MCF 10A (cell line): ENCODE measurements at regions of chr10 and their contacts with region 1.

Region 1: DNA sequence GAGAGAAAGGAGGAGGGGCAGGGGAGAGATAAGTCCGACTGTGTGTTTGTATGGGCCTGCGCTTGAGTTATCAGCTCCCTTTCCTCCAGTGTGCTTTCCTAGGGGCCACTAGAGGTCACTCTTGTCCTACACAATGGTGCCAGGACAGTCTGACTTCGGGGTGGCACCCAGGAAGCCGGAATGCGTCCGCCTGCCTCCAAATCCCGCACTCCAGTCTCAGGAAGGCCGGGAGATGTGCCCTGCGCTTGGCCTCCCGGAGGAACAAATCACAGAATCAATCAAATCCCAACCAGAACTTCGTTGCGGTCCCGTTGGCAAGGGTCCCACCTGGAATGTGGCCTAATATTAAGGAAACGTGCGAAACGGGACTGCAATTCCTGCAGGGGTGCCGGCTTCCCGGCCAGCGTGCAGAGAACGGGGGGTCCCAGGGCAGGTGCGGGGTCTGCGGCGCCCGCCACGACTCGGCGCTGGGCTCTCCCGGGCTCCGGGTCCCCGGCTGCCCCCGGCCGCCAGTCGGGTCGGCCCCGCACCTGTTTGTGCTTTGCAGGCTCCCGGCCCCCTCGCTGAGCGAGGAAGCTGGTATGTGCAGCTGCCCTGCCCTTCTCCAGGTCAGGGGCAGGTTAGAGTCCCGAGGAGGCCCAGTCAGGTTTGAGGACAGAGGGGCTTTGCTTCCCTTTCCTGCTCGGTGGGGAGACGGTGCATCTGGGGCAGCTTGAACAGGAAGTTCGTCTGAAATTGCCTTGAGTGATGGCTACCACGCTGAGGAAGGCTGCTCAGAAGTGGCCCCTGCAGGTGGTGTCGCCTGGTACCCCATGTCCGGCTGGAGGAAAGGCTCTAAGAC is 21.0 kb upstream of the HPS1 start:
- DNase-seq: peak; percentile 93
- H3K4me3 Mint-ChIP-seq: peak overlapping the region; percentile 69
- H3K27ac Mint-ChIP-seq: no peak overlapping the region
- H3K4me1 Mint-ChIP-seq: no peaks in the 10 kb centered on the region
- H3K27me3 Mint-ChIP-seq: peaks cover 9% of the 10 kb centered on the region
- CTCF ChIP-seq: peak; percentile 83

Region 2: GRCh38 chr10:98446661-98447221 is 21.0 kb before region 1 on chr10 and contains the start of gene HPS1:
- CTCF ChIA-PET with region 1: interaction called, 21 read pairs
- POLR2A ChIA-PET with region 1: no interaction called
- intact Hi-C with region 1: no loop called
- DNase-seq: peak; percentile 57
- H3K4me3 Mint-ChIP-seq: peak within 1 kb of the TSS; percentile 88
- H3K27ac Mint-ChIP-seq: peak within 1 kb of the TSS; percentile 76
- H3K4me1 Mint-ChIP-seq: peaks cover 16% of the 10 kb centered on the region
- H3K27me3 Mint-ChIP-seq: peaks cover 18% of the 10 kb centered on the region
- CTCF ChIP-seq: no peak
- total RNA-seq, gene HPS1: 40.5 and 41.8 TPM in 2 replicates

Region 3: GRCh38 chr10:98492763-98493162 is 25.0 kb after region 1 on chr10:
- CTCF ChIA-PET with region 1: no interaction called
- POLR2A ChIA-PET with region 1: no interaction called
- intact Hi-C with region 1: no loop called
- DNase-seq: no peak
- H3K4me3 Mint-ChIP-seq: no peak overlapping the region
- H3K27ac Mint-ChIP-seq: no peak overlapping the region
- H3K4me1 Mint-ChIP-seq: no peaks in the 10 kb centered on the region
- H3K27me3 Mint-ChIP-seq: peaks cover 36% of the 10 kb centered on the region
- CTCF ChIP-seq: no peak

Region 4: GRCh38 chr10:98748298-98748697 is 280.6 kb after region 1 on chr10:
- CTCF ChIA-PET with region 1: interaction called, 3 read pairs
- POLR2A ChIA-PET with region 1: no interaction called
- intact Hi-C with region 1: loop called (anchors 1 kb)
- DNase-seq: peak; percentile 62
- H3K4me3 Mint-ChIP-seq: no peak overlapping the region
- H3K27ac Mint-ChIP-seq: no peak overlapping the region
- H3K4me1 Mint-ChIP-seq: no peaks in the 10 kb centered on the region
- H3K27me3 Mint-ChIP-seq: no peaks in the 10 kb centered on the region
- CTCF ChIP-seq: peak; percentile 13

Region 5: GRCh38 chr10:99042051-99042771 is 574.5 kb after region 1 on chr10:
- CTCF ChIA-PET with region 1: interaction called, 20 read pairs
- POLR2A ChIA-PET with region 1: no interaction called
- intact Hi-C with region 1: loop called (anchors 1 kb)
- DNase-seq: no peak
- H3K4me3 Mint-ChIP-seq: no peak overlapping the region
- H3K27ac Mint-ChIP-seq: no peak overlapping the region
- H3K4me1 Mint-ChIP-seq: no peaks in the 10 kb centered on the region
- H3K27me3 Mint-ChIP-seq: no peaks in the 10 kb centered on the region
- CTCF ChIP-seq: no peak

Region 6: DNA sequence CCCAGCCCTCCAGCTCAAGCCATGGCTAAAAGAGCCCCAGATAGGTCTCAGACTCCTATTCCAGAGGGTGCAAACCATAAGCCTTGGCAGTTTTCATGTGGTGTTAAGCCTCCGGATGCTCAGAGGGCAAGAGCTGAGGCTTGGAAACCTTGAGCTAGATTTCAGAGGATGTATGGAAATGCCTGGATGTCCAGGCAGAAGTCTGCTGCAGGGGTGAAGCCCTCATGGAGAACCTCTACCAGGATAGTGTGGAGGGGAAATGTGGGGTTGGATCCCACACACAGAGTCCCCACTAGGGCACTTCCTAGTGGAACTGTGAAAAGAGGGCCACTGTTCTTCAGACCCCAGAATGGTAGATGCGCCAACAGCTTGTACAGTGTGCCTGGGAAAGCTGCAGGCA is 781.1 kb after region 1 on chr10:
- CTCF ChIA-PET with region 1: interaction called, 22 read pairs
- POLR2A ChIA-PET with region 1: no interaction called
- intact Hi-C with region 1: loop called (anchors 1 kb)
- DNase-seq: no peak
- H3K4me3 Mint-ChIP-seq: no peak overlapping the region
- H3K27ac Mint-ChIP-seq: no peak overlapping the region
- H3K4me1 Mint-ChIP-seq: no peaks in the 10 kb centered on the region
- H3K27me3 Mint-ChIP-seq: no peaks in the 10 kb centered on the region
- CTCF ChIP-seq: no peak

Region 7: DNA sequence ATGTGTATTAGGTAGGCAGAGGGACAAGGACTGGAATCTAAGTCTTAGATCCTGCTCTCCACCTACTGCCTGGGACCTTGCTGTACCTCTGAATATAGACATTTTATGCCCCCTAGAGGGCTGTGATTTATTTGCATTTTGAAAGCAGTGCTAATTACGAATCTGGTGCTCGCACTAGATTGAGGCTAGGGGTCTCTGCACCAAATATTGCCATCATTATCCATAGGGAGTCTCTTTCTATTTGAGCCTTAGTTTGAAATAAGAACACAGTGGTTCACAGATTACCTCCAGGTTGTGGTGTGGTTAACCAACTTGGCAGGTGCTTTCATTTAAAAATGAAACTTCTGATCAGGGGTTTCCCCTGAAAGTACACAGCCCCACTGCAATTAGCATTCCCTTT is 903.3 kb after region 1 on chr10:
- CTCF ChIA-PET with region 1: interaction called, 4 read pairs
- POLR2A ChIA-PET with region 1: no interaction called
- intact Hi-C with region 1: loop called (anchors 2 kb)
- DNase-seq: peak; percentile 43
- H3K4me3 Mint-ChIP-seq: no peak overlapping the region
- H3K27ac Mint-ChIP-seq: no peak overlapping the region
- H3K4me1 Mint-ChIP-seq: peaks cover 11% of the 10 kb centered on the region
- H3K27me3 Mint-ChIP-seq: peaks cover 42% of the 10 kb centered on the region
- CTCF ChIP-seq: peak; percentile 47